Left colon (tissue), 2 donors: ENCODE measurements at regions of chr5 and their contacts with region 1.

Region 1: DNA sequence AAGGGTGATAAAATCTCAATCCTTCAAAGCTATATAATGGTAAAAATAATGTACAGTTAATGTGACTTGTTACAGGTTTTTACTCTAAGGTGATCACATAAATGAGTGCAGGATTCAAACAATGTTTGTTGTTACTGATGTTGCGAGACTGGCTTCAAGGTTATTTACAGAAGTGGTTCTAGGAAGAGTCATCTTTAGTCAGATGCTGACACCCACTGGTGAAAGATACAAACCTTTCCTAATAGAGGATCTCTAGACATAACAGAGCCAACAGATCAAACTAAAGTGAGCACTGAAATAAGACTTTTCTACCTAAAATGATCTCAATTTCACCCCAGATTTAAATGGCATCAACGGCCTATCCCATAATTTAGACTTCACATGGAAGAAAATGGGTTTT is 20.2 kb downstream of the ARSB start:
- DNase-seq: no peak
- ATAC-seq: peak; percentile 54

Region 2: DNA sequence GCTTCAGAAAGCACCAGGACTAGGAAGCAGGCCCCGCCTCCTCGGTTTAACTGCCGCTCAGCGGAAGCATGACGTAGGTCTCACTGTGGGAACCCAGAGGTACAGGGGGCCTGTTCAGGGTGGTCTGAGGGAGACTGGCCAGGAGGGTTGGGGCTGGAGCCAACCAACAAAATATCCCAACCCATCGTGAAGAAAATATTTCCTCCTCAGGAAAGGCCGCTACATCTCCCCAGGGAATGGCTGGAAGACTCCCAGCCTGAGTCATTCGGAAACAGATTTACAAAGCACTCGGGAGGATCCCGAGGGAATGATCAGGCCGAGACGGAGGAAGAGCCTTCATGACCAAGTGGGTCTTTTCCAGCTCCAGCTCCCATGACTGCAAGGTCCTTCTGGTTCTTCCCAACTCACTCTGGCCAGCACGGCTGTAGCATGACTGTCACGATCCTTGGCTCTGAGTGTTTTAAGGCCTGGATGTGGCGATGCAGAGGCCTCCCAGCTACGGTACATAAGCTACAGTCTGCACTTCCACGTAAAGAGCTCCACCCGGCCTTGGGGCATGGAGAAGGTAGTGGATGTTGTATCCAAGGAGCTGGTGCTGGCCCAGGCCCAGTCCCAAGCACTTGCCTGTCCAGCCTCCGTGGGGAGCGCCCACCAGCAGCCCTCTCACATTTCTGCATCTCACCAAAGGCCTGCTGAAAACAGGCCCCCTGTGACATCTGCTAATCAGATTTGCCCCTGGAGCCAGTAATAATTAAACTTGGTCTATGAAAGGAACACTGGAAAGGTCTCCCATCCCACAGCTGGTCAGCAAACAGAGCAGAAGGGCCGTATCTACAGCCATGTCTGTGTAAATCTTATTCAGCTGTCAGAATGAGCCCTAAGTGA is 416.9 kb before region 1 on chr5:
- intact Hi-C with region 1: loop called in 1 of 2 experiments (anchors 10 kb)
- DNase-seq: peak; percentile 49 to 69
- ATAC-seq: no peak

Region 3: DNA sequence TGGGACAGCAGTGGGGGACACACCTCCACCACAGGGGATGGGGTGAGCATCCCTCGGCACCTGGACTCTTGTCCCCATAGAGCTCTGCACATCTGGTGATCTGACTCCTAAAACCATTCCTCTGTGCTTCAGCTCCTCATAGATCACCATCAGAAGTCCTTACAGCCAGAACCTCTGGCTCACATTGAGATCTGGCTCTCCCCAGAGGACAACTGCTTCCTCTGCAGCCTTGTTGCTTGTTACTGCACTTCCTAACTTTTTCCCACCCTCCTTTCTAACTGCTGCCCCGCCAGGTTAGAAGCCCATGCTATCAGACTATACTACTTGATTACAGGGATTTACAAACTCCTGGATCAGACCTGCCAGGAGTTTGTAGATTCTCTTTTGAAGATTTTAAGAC is 44.3 kb before region 1 on chr5:
- intact Hi-C with region 1: no loop called
- DNase-seq: no peak
- ATAC-seq: no peak

Region 4: DNA sequence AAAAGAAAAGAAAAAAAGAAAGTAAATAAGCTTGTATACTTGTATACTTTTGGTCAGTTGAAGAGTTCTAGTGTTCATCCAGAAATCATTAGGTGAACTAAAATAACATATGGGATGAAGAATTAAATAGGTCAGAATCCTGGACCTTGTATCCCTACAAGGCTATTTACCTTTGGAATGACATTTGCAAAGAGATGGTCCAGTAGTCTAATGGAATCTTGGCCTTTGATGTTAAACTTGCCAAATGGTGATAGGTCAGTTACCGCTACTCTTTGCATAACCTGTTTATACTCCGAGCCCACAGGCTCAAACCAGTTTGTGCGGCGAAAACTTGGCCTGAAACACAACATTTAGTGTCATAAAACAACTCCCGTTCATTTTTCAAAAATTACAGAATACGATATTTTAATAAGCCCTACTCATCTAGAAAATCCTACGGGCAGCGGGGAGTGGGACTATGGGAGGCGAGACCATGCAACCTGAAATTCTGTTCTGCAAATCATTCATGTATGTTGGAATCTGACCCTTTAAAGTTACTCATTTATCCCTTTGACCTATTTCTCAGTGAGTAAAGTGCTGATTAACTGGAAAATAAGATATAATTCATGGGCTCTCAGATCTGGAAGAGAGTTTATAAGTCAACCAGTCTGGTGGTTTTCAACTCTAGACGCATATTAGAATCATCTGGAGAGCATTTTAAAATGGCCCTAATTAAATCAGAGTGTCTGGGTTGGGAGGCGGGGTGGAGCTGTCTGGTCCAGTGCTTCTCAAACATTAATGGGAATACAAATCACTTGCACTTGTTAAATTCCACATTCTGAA is 66.0 kb after region 1 on chr5:
- intact Hi-C with region 1: no loop called
- DNase-seq: no peak
- ATAC-seq: no peak